ENCODE measurements at regions of chr4 and their contacts with region 1.

Region 1: GRCh38 chr4:10018818-10019461 is 2.4 kb downstream of the SLC2A9 start:
- DNase-seq: peak; percentile 99
- H3K4me3 Mint-ChIP-seq: peak overlapping the region; percentile 88
- H3K27ac Mint-ChIP-seq: peak overlapping the region; percentile 96
- H3K4me1 Mint-ChIP-seq: peaks cover 17% of the 10 kb centered on the region
- H3K27me3 Mint-ChIP-seq: no peaks in the 10 kb centered on the region

Region 2: DNA sequence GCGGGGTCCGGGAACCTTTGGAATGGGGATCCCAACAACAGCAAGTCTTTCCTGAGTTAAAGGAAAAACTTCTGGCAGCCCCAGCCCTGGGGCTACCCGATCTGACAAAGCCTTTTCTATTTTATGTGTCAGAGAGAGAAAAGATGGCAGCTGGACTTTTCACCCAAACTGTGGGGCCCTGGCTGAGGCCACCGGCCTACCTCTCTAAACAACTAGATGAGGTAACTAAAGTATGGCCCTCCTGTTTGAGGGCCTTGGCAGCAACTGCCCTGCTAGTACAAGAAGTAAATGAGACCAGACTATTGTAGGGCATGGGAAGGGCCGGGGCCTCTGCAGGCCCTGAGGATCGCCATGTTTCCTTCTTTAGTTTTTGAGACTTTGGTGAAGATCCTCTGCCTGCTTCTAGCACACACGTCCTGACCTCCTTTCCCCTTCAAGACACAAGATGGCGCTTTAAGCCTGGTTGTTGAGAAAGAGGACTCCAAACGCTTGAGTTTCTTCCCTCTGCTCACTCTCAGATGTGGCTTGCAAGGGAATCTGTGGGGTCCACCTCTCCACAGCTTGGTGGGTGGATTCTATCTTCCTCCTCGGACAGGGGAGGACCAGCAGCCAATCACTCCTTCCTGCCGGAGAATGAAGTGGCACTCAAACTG is 256.0 kb before region 1 on chr4:
- intact Hi-C with region 1: loop called (anchors 1 kb)
- DNase-seq: peak; percentile 87
- H3K4me3 Mint-ChIP-seq: no peak overlapping the region
- H3K27ac Mint-ChIP-seq: no peak overlapping the region
- H3K4me1 Mint-ChIP-seq: no peaks in the 10 kb centered on the region
- H3K27me3 Mint-ChIP-seq: peaks cover 13% of the 10 kb centered on the region

Region 3: GRCh38 chr4:10096201-10096977 is 77.4 kb after region 1 on chr4:
- intact Hi-C with region 1: loop called (anchors 1 kb)
- DNase-seq: peak; percentile 92
- H3K4me3 Mint-ChIP-seq: peak overlapping the region; percentile 66
- H3K27ac Mint-ChIP-seq: peak overlapping the region; percentile 94
- H3K4me1 Mint-ChIP-seq: peaks cover 89% of the 10 kb centered on the region
- H3K27me3 Mint-ChIP-seq: no peaks in the 10 kb centered on the region

Region 4: GRCh38 chr4:10403633-10404445 is 384.9 kb after region 1 on chr4:
- intact Hi-C with region 1: loop called (anchors 5 kb)
- DNase-seq: peak; percentile 73
- H3K4me3 Mint-ChIP-seq: no peak overlapping the region
- H3K27ac Mint-ChIP-seq: no peak overlapping the region
- H3K4me1 Mint-ChIP-seq: no peaks in the 10 kb centered on the region
- H3K27me3 Mint-ChIP-seq: no peaks in the 10 kb centered on the region

Measured in activated CD4-positive, alpha-beta T cell treated with anti-CD3 and anti-CD28 coated beads, Interleukin-2, amount 10 ng/mL, durations not matched to agents 24 days and 14 days (primary cell).